PC-9 (cell line): ENCODE measurements at regions of chr19 and their contacts with region 1.

Region 1: DNA sequence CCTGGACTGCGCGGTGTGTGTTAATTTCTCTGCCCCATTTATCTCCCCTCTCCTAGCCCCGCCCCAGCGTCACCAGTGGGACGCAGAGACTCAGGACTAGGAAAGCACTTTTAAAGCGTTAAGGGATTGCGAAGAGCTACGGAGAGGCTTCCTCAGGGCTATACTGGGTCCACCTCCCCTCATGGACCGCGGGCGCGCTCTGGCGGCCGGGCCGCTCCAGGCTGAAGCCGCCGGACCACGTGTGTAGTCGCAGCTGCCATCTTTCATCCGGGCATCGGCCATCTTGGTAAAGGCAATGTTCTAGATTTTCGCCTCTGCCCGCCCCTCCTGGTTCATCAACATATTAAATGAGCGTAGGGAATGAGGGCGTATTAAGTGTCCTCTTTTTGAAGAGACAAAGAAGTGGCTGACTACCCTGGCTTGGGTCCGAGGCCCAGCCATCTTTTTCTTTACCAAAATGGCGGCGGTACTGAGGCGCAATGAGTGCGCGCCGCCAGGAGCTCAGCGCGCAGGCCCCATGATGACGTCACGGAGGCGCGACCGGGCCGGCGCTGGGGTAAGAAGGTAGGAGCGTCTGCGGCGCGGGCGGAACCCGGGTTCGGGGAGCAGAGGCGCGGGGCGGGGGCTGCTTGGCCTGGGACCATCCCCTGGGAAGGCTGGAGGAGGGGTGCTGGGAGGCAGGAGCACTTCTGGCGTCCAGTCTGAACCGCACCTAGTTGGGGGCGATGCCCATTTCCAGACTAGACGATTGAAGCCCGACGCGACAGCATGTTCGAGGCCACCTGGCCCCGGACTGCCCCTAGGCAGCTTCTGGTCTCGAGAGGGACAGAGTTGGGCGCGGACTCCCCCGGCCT is at the start of gene CCDC124:
- DNase-seq: peak; percentile 85 to 94
- H3K4me3 ChIP-seq: peak within 1 kb of the TSS; percentile 87
- H3K27ac ChIP-seq: peak within 1 kb of the TSS; percentile 86
- H3K4me1 ChIP-seq: peaks cover 12% of the 10 kb centered on the region
- H3K27me3 ChIP-seq: no peaks in the 10 kb centered on the region
- CTCF ChIP-seq: peak; percentile 95
- total RNA-seq, gene CCDC124: 114 and 118 TPM in 2 replicates

Region 2: GRCh38 chr19:18179957-18180356 is 247.2 kb after region 1 on chr19:
- CTCF ChIA-PET with region 1: no interaction called
- POLR2A ChIA-PET with region 1: no interaction called
- intact Hi-C with region 1: no loop called
- DNase-seq: no peak
- H3K4me3 ChIP-seq: no peak overlapping the region
- H3K27ac ChIP-seq: no peak overlapping the region
- H3K4me1 ChIP-seq: peaks cover 5% of the 10 kb centered on the region
- H3K27me3 ChIP-seq: no peaks in the 10 kb centered on the region
- CTCF ChIP-seq: no peak

Region 3: DNA sequence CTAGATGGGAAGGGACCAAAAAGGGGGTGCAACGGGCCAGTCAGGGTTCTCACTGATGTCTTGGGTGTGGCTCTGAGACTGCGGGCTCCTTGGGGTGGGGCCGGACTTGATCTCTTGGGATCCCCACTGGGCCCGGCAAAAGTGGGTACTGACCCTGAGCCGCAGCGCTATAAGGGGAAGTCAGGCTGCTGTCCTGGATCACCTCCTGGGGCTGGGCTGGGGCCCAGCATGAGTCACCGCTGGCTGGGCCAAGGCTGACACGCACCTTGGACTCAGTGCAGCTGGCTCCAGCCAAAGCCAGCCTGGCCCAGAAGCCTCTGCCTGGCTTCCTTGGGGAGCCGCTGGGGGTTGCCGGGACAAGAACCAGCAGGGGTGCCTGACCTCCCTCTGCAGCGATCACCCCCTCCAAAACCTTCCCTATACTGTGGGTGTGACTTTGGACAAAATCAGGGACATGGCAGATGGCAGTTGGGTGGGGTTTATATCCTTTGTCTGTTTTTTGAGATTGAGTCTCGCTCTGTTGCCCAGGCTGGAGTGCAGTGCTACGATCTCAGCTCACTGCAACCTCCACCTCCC is 342.2 kb after region 1 on chr19:
- CTCF ChIA-PET with region 1: interaction called, 3 read pairs
- POLR2A ChIA-PET with region 1: interaction called, 12 read pairs
- intact Hi-C with region 1: no loop called
- DNase-seq: peak; percentile 76 to 77
- H3K4me3 ChIP-seq: no peak overlapping the region
- H3K27ac ChIP-seq: peak overlapping the region; percentile 46
- H3K4me1 ChIP-seq: peaks cover 40% of the 10 kb centered on the region
- H3K27me3 ChIP-seq: no peaks in the 10 kb centered on the region
- CTCF ChIP-seq: no peak

Region 4: DNA sequence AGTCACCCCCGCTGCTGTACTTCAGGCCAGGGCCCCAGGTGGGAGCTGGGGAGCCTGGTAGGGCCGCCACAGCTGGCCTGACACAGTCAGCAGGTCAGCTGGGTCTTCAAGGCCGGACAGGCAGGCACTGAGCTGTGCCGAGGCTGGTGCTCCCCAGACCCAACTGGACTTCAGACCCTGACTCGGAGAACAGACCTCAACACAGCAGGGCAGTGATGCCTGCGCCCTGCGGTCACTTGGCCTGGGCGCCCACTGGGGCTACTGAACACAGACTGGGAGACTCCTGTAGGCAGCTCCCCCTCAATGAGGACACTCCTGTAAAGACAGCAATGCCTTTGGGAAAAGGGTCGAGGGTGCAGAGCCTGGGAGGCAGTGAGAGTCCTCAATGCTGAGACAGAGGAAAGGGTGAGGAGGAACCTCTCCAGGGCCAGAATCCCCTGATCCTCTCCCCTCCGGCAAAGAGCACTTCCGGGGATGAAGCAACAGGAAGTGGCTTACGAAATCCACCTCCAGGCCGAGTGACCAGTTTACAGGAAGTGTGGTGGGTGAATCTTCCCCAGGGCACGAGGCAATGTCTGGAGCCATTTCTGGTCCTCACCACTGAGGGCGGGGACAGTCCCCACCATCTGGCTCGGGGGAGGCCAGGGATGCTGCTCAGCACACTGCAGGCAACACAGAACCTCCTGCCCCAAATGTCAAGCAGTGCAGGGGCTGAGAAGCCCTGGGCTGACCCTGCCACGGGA is 546.0 kb after region 1 on chr19:
- CTCF ChIA-PET with region 1: no interaction called
- POLR2A ChIA-PET with region 1: no interaction called
- intact Hi-C with region 1: no loop called
- DNase-seq: peak; percentile 55 to 79
- H3K4me3 ChIP-seq: no peak overlapping the region
- H3K27ac ChIP-seq: peak overlapping the region; percentile 36
- H3K4me1 ChIP-seq: peaks cover 22% of the 10 kb centered on the region
- H3K27me3 ChIP-seq: no peaks in the 10 kb centered on the region
- CTCF ChIP-seq: no peak

Region 5: GRCh38 chr19:19320362-19321142 is 1387.8 kb after region 1 on chr19 and contains the starts of genes MAU2 and SUGP1:
- CTCF ChIA-PET with region 1: no interaction called
- POLR2A ChIA-PET with region 1: no interaction called
- intact Hi-C with region 1: no loop called
- DNase-seq: peak; percentile 90
- H3K4me3 ChIP-seq: peak within 1 kb of the TSS; percentile 93
- H3K27ac ChIP-seq: peak within 1 kb of the TSS; percentile 71
- H3K4me1 ChIP-seq: peaks cover 23% of the 10 kb centered on the region
- H3K27me3 ChIP-seq: no peaks in the 10 kb centered on the region
- CTCF ChIP-seq: no peak; the same call in 1 of the 2 replicates
- total RNA-seq, gene MAU2: 46.1 and 55.2 TPM in 2 replicates
- total RNA-seq, gene SUGP1: 39.9 and 56.7 TPM in 2 replicates